Activated naive CD4-positive, alpha-beta T cell treated with anti-CD3 and anti-CD28 coated beads, Interleukin-2, amount 10 ng/mL, durations not matched to agents 7 days and 5 days (primary cell): ENCODE measurements at regions of chr4 and their contacts with region 1.

Region 1: DNA sequence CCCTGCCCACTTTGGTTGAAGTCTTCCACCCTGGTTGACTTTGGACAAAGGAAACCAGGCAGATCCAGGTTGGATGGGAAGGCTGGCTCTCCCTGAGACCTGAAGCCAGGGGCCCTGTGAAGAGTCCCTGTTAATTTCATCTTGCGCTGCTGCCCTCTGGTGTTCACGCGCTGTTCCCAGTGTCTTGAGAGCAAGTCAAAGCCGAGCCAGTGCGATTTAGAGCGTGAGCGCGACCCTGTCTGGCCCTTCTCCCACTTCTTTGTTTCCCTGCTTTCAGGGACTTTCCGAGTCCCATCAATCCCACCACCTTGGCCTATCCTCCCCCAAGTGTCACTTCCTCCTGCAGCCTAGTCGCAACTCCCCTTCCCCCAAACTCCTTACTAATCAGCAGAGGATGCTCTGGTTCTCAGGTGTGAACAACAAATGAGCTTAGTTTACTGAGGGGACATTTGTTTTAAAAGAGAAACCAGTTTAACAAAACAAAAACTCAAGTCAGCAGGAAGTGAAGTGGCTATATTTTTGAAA is 25.8 kb upstream of the CHRNA9 start:
- DNase-seq: peak; percentile 95
- H3K4me3 Mint-ChIP-seq: peak overlapping the region; percentile 62
- H3K27ac Mint-ChIP-seq: peak overlapping the region; percentile 97
- H3K4me1 Mint-ChIP-seq: peaks cover 86% of the 10 kb centered on the region
- H3K27me3 Mint-ChIP-seq: no peaks in the 10 kb centered on the region

Region 2: DNA sequence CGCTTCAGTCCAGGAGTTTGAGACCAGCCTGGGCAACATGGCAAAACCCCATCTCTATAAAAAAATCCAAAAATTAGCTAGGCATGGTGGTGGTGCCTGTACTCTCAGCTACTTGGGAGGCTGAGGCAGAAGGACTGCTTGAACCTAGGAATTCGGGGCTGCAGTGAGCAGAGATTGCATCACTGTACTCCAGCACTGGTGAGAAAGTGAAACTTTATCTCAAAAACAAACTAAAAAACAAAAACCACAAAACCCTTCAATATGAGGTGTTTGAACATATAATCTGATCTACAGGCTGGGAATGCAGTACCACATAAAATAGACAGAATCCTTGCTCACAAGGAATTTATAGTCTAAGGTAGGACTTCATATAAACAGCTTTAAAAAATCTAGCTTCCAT is 435.5 kb before region 1 on chr4:
- CTCF ChIA-PET with region 1: no interaction called
- DNase-seq: peak; percentile 32
- H3K4me3 Mint-ChIP-seq: no peak overlapping the region
- H3K27ac Mint-ChIP-seq: peak overlapping the region; percentile 57
- H3K4me1 Mint-ChIP-seq: peaks cover 18% of the 10 kb centered on the region
- H3K27me3 Mint-ChIP-seq: no peaks in the 10 kb centered on the region

Region 3: GRCh38 chr4:40199999-40200874 is 109.1 kb before region 1 on chr4:
- CTCF ChIA-PET with region 1: interaction called, 12 read pairs
- DNase-seq: peak; percentile 80
- H3K4me3 Mint-ChIP-seq: peak overlapping the region; percentile 93
- H3K27ac Mint-ChIP-seq: peak overlapping the region; percentile 96
- H3K4me1 Mint-ChIP-seq: peaks cover 41% of the 10 kb centered on the region
- H3K27me3 Mint-ChIP-seq: no peaks in the 10 kb centered on the region

Region 4: GRCh38 chr4:40228497-40229365 is 80.6 kb before region 1 on chr4:
- CTCF ChIA-PET with region 1: interaction called, 10 read pairs
- DNase-seq: no peak
- H3K4me3 Mint-ChIP-seq: peak overlapping the region; percentile 49
- H3K27ac Mint-ChIP-seq: peak overlapping the region; percentile 93
- H3K4me1 Mint-ChIP-seq: peaks cover 95% of the 10 kb centered on the region
- H3K27me3 Mint-ChIP-seq: no peaks in the 10 kb centered on the region

Region 5: GRCh38 chr4:40283968-40284367 is 25.3 kb before region 1 on chr4:
- CTCF ChIA-PET with region 1: interaction called, 13 read pairs
- DNase-seq: peak; percentile 84
- H3K4me3 Mint-ChIP-seq: no peak overlapping the region
- H3K27ac Mint-ChIP-seq: peak overlapping the region; percentile 87
- H3K4me1 Mint-ChIP-seq: peaks cover 61% of the 10 kb centered on the region
- H3K27me3 Mint-ChIP-seq: no peaks in the 10 kb centered on the region

Region 6: DNA sequence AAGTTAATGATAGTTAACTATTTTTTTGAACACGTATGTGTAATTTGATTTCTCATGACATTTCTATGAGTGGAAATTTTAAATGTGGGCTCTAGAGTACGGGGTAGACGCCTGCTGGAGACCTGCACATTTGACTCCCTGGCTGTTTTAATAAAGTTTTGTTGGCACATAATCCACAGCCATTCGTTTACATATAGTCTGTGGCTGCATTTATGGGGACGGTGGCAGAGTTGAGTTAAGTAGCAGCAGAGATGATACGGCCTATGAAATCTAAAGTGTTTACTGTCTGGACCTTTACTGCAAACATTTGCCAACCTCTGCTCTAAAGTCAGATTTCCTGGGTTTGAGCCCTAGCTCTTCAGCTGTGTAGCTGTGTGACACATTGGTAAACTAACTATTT is 144.6 kb after region 1 on chr4:
- CTCF ChIA-PET with region 1: no interaction called
- DNase-seq: no peak
- H3K4me3 Mint-ChIP-seq: no peak overlapping the region
- H3K27ac Mint-ChIP-seq: no peak overlapping the region
- H3K4me1 Mint-ChIP-seq: peaks cover 36% of the 10 kb centered on the region
- H3K27me3 Mint-ChIP-seq: no peaks in the 10 kb centered on the region